Aorta (tissue), 5 donors: ENCODE measurements at regions of chr11 and their contacts with region 1.

Region 1: GRCh38 chr11:69642913-69643632 is 2.1 kb downstream of the CCND1 start:
- DNase-seq: peak; percentile 86 to 94
- ATAC-seq: peak; percentile 79
- H3K4me3 ChIP-seq: peak overlapping the region; percentile 79 to 81
- H3K27ac ChIP-seq: peak overlapping the region in 1 of 2 donors; percentile 4
- H3K4me1 ChIP-seq: no peaks in the 10 kb centered on the region
- H3K27me3 ChIP-seq: peaks cover 0 to 2% of the 10 kb centered on the region in 2 donors

Region 2: GRCh38 chr11:69101115-69101791 is 541.8 kb before region 1 on chr11:
- intact Hi-C with region 1: loop called (anchors 1 to 2 kb)
- DNase-seq: peak; percentile 88 to 92
- ATAC-seq: peak; percentile 90
- H3K4me3 ChIP-seq: no peak overlapping the region
- H3K27ac ChIP-seq: no peak overlapping the region
- H3K4me1 ChIP-seq: no peaks in the 10 kb centered on the region
- H3K27me3 ChIP-seq: no peaks in the 10 kb centered on the region

Region 3: GRCh38 chr11:69122642-69123431 is 520.2 kb before region 1 on chr11:
- intact Hi-C with region 1: loop called in 1 of 2 experiments (anchors 5 kb)
- DNase-seq: peak; percentile 78 to 91
- ATAC-seq: peak; percentile 76
- H3K4me3 ChIP-seq: no peak overlapping the region
- H3K27ac ChIP-seq: peak overlapping the region in 1 of 2 donors; percentile 11
- H3K4me1 ChIP-seq: peaks cover 0 to 2% of the 10 kb centered on the region in 2 donors
- H3K27me3 ChIP-seq: no peaks in the 10 kb centered on the region

Region 4: GRCh38 chr11:69296890-69297786 is 345.9 kb before region 1 on chr11:
- intact Hi-C with region 1: loop called (anchors 1 to 2 kb)
- DNase-seq: peak; percentile 98 to 99
- ATAC-seq: peak; percentile 87
- H3K4me3 ChIP-seq: no peak overlapping the region
- H3K27ac ChIP-seq: peak overlapping the region; percentile 34 to 84
- H3K4me1 ChIP-seq: no peaks in the 10 kb centered on the region
- H3K27me3 ChIP-seq: no peaks in the 10 kb centered on the region

Region 5: GRCh38 chr11:69417146-69418085 is 225.7 kb before region 1 on chr11:
- intact Hi-C with region 1: loop called in 1 of 2 experiments (anchors 2 kb)
- DNase-seq: peak in 1 of 2 donors; percentile 73
- ATAC-seq: no peak
- H3K4me3 ChIP-seq: no peak overlapping the region
- H3K27ac ChIP-seq: peak overlapping the region in 1 of 2 donors; percentile 53
- H3K4me1 ChIP-seq: no peaks in the 10 kb centered on the region
- H3K27me3 ChIP-seq: no peaks in the 10 kb centered on the region

Region 6: GRCh38 chr11:69497221-69497787 is 145.8 kb before region 1 on chr11:
- intact Hi-C with region 1: loop called in 1 of 2 experiments (anchors 5 kb)
- DNase-seq: peak; percentile 87 to 93
- ATAC-seq: peak; percentile 90
- H3K4me3 ChIP-seq: no peak overlapping the region
- H3K27ac ChIP-seq: no peak overlapping the region
- H3K4me1 ChIP-seq: no peaks in the 10 kb centered on the region
- H3K27me3 ChIP-seq: no peaks in the 10 kb centered on the region

Region 7: GRCh38 chr11:69540118-69540502 is 103.0 kb before region 1 on chr11:
- intact Hi-C with region 1: loop called in 1 of 2 experiments (anchors 1 kb)
- DNase-seq: peak; percentile 92 to 93
- ATAC-seq: peak; percentile 83
- H3K4me3 ChIP-seq: no peak overlapping the region
- H3K27ac ChIP-seq: peak overlapping the region; percentile 1 to 84
- H3K4me1 ChIP-seq: no peaks in the 10 kb centered on the region
- H3K27me3 ChIP-seq: no peaks in the 10 kb centered on the region